CD4-positive, alpha-beta memory T cell (primary cell): ENCODE measurements at regions of chr7 and their contacts with region 1.

Region 1: GRCh38 chr7:140175221-140176121 is 1.3 kb downstream of the KDM7A start:
- DNase-seq: peak; percentile 91 to 98 (median 95)
- H3K4me3 ChIP-seq: peak overlapping the region in 1 of 2 donors; percentile 60
- H3K4me3 Mint-ChIP-seq: peak overlapping the region; percentile 82 to 92 (median 90)
- H3K27ac ChIP-seq: peak overlapping the region; percentile 85
- H3K27ac Mint-ChIP-seq: peak overlapping the region; percentile 82 to 98 (median 94)
- H3K4me1 ChIP-seq: peaks cover 41% of the 10 kb centered on the region
- H3K4me1 Mint-ChIP-seq: peaks cover 29 to 56% (median 45%) of the 10 kb centered on the region in 4 donors
- H3K27me3 ChIP-seq: no peaks in the 10 kb centered on the region
- H3K27me3 Mint-ChIP-seq: no peaks in the 10 kb centered on the region

Region 2: GRCh38 chr7:139359366-139360209 is 815.9 kb before region 1 on chr7 and contains the start of gene LUC7L2:
- CTCF ChIA-PET with region 1: no interaction called
- POLR2A ChIA-PET with region 1: interaction called, 9 read pairs
- intact Hi-C with region 1: loop called (anchors 5 kb)
- DNase-seq: peak; percentile 99
- H3K4me3 ChIP-seq: peak within 1 kb of the TSS; percentile 90 to 100
- H3K4me3 Mint-ChIP-seq: peak within 1 kb of the TSS; percentile 96 to 100 (median 99)
- H3K27ac ChIP-seq: peak within 1 kb of the TSS; percentile 98
- H3K27ac Mint-ChIP-seq: peak within 1 kb of the TSS; percentile 98 to 99 (median 99)
- H3K4me1 ChIP-seq: peaks cover 47% of the 10 kb centered on the region
- H3K4me1 Mint-ChIP-seq: peaks cover 20 to 65% (median 38%) of the 10 kb centered on the region in 4 donors
- H3K27me3 ChIP-seq: no peaks in the 10 kb centered on the region
- H3K27me3 Mint-ChIP-seq: no peaks in the 10 kb centered on the region
- total RNA-seq, gene LUC7L2: 131 to 133 TPM

Region 3: DNA sequence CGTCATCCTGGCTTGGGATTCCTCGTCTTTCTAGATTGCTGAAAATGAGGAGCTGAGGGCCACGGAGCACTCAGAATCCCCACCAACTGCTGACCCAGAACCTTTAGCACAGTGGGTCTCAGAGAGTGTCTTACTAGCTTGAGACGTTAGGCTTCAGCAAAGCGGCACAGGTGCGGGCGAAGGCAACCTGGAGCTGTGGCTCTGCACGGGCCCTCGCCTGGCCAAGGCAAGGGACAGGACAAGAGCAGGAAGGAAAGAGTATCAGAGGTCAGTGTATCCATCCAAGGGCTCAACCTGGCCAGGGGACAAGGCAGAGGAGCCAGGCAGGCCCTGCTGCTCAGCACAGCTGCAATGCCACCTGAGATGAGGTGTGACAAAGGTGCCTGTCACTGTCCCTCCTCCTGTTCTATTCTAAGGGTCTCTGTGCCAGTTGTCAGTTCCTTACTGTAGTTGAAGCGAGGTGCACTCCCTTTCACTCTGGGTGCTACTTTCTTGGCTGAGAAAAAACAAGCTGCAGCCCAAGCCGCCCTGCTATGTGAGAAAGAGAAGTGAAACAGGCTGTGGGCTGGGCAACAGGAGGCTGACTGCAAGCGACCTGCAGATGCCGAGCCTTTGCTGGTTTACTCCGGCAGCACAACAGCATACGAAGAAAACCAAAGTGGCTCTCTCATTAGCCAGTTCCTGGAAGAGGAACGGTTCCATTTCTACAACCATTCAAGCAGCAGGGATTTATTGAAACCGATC is 34.6 kb after region 1 on chr7:
- CTCF ChIA-PET with region 1: interaction called, 3 read pairs
- POLR2A ChIA-PET with region 1: interaction called, 27 read pairs
- intact Hi-C with region 1: no loop called
- DNase-seq: peak in 3 of 5 donors; percentile 22 to 37 (median 30)
- H3K4me3 ChIP-seq: peak overlapping the region in 1 of 2 donors; percentile 21
- H3K4me3 Mint-ChIP-seq: peak overlapping the region; percentile 38 to 86 (median 79)
- H3K27ac ChIP-seq: no peak overlapping the region
- H3K27ac Mint-ChIP-seq: peak overlapping the region; percentile 49 to 91 (median 88)
- H3K4me1 ChIP-seq: peaks cover 55% of the 10 kb centered on the region
- H3K4me1 Mint-ChIP-seq: peaks cover 36 to 65% (median 42%) of the 10 kb centered on the region in 4 donors
- H3K27me3 ChIP-seq: no peaks in the 10 kb centered on the region
- H3K27me3 Mint-ChIP-seq: peaks cover 0 to 2% of the 10 kb centered on the region in 2 donors

Region 4: DNA sequence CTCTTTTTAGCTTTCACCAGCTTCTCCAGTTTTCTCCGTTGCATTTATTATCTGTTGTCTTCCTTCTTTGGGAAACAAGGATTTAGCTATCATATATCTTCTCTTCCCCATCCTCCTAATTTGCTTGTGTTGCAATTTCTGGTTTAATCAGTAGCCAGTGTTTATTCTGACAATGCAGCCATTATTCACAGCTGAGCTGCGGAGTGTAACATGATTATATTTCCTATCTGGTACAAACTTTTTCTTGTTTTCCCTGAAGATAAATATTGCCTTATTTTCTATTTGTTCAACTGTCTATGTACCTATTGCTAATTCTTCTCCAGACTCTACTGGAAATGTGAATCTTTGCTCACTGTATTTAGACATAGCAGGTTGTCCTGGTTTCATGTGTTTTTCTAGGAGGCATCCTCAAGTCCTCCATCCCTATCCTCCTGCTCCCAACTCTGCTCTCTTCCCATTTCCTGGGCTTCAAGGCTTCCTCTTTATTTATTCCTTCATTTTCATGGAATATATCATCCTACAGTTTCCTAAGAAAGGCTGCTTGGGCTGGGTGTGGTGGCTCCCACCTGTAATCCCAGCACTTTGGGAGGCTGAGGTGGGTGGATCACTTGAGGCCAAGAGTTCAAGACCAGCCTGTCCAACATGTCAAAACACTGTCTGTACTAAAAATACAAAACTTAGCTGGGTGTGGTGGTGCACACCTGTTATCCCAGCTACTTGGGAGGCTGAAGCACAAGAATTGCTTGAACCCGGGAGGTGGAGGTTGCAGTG is 73.8 kb after region 1 on chr7:
- CTCF ChIA-PET with region 1: interaction called, 5 read pairs
- POLR2A ChIA-PET with region 1: interaction called, 56 read pairs
- intact Hi-C with region 1: no loop called
- DNase-seq: no peak
- H3K4me3 ChIP-seq: no peak overlapping the region
- H3K4me3 Mint-ChIP-seq: no peak overlapping the region
- H3K27ac ChIP-seq: no peak overlapping the region
- H3K27ac Mint-ChIP-seq: no peak overlapping the region
- H3K4me1 ChIP-seq: peaks cover 23% of the 10 kb centered on the region
- H3K4me1 Mint-ChIP-seq: peaks cover 14 to 24% (median 17%) of the 10 kb centered on the region in 4 donors
- H3K27me3 ChIP-seq: no peaks in the 10 kb centered on the region
- H3K27me3 Mint-ChIP-seq: peaks cover 0 to 1% of the 10 kb centered on the region in 2 donors

Region 5: DNA sequence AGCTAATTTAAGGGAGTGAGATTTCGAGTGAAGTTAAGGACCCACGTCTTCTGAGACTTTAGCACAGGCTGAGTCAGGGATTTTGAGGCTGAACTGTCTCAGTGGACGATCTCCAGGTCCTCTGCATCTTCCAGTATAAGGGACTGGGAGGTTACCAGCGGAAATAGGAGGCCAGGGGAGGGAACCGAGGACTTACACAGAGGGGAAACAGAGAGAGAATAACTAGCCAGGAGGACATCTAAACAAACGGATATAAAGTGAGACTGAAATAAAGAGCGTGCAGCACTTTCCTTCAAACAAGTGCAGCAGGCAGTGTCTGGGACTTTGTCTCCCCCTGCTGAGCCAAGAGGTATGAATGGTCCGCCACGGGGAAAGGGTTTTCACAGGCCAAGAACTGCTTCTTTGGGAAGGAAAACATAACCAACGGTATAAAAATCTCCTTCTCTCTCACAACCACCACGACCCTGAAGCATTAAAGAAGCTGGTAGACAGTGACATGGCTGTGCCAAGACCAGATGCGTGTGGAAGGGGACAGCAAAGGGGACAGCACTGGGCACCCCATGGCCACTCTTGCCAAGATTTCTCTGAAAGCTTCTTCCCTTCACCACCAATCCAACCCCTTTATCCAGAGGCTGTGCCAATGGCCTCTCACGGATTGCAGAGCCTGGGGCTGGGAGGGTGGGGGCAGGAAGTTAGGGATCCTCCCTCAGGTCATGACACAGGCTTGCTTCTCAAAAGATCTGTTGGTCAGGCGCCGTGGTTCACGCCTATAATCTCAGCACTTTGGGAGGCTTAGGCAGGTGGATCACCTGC is 150.9 kb after region 1 on chr7:
- CTCF ChIA-PET with region 1: interaction called, 3 read pairs
- POLR2A ChIA-PET with region 1: interaction called, 6 read pairs
- intact Hi-C with region 1: loop called (anchors 1 kb)
- DNase-seq: peak; percentile 45 to 53 (median 52)
- H3K4me3 ChIP-seq: no peak overlapping the region
- H3K4me3 Mint-ChIP-seq: no peak overlapping the region
- H3K27ac ChIP-seq: no peak overlapping the region
- H3K27ac Mint-ChIP-seq: no peak overlapping the region
- H3K4me1 ChIP-seq: peaks cover 7% of the 10 kb centered on the region
- H3K4me1 Mint-ChIP-seq: peaks cover 0 to 2% (median 0%) of the 10 kb centered on the region in 4 donors
- H3K27me3 ChIP-seq: no peaks in the 10 kb centered on the region
- H3K27me3 Mint-ChIP-seq: no peaks in the 10 kb centered on the region

Region 6: GRCh38 chr7:140494867-140495266 is 319.4 kb after region 1 on chr7:
- CTCF ChIA-PET with region 1: no interaction called
- POLR2A ChIA-PET with region 1: no interaction called
- intact Hi-C with region 1: loop called (anchors 2 kb)
- DNase-seq: no peak
- H3K4me3 ChIP-seq: no peak overlapping the region
- H3K4me3 Mint-ChIP-seq: no peak overlapping the region
- H3K27ac ChIP-seq: no peak overlapping the region
- H3K27ac Mint-ChIP-seq: no peak overlapping the region
- H3K4me1 ChIP-seq: no peaks in the 10 kb centered on the region
- H3K4me1 Mint-ChIP-seq: peaks cover 0 to 2% (median under 1%) of the 10 kb centered on the region in 4 donors
- H3K27me3 ChIP-seq: no peaks in the 10 kb centered on the region
- H3K27me3 Mint-ChIP-seq: no peaks in the 10 kb centered on the region